Endothelial cell of umbilical vein (primary cell): ENCODE measurements at regions of chr1 and their contacts with region 1.

Region 1: GRCh38 chr1:152347116-152347728 is 12.6 kb downstream of the FLG2 start:
- DNase-seq: peak; percentile 63
- H3K4me3 ChIP-seq: no peak overlapping the region
- H3K27ac ChIP-seq: no peak overlapping the region
- H3K4me1 ChIP-seq: no peaks in the 10 kb centered on the region
- H3K27me3 ChIP-seq: peaks cover 0 to 1% of the 10 kb centered on the region in 2 experiments
- CTCF ChIP-seq: peak; percentile 68 to 72
- POLR2A ChIP-seq: no peak

Region 2: DNA sequence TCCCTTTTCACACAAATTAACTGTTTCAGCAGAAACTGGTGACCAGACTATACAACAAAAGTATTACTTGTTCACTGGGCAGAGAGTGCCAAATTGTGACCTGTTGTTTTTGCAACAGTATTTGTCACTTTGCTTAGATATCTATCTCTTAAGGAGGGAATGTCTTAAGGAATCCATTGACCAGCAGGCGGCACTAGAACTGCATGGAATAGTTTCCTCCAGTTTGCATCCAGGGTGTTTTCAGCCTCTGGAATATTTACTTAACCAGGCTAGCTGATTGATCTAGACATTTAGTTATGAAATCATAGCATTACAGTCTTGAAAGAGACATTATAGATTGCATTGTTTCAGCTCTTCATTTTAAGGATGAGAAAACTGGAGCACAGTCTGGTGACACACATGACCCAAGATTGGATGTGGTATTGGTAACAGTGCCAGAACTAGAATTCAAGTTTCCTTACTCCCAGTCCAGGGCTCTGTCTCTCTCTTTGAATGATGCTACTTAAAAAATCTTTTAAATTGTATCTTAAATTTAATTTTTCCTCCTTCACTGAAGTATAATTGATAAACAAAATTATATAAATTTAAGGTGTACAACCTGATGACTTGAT is 205.1 kb before region 1 on chr1:
- CTCF ChIA-PET with region 1: interaction called, 4 read pairs
- POLR2A ChIA-PET with region 1: no interaction called
- dilution Hi-C with region 1: no loop called
- intact Hi-C with region 1: loop called (anchors 1 kb)
- DNase-seq: peak; percentile 57
- H3K4me3 ChIP-seq: no peak overlapping the region
- H3K27ac ChIP-seq: no peak overlapping the region
- H3K4me1 ChIP-seq: no peaks in the 10 kb centered on the region
- H3K27me3 ChIP-seq: no peaks in the 10 kb centered on the region
- CTCF ChIP-seq: peak; percentile 63 to 65
- POLR2A ChIP-seq: no peak

Region 3: DNA sequence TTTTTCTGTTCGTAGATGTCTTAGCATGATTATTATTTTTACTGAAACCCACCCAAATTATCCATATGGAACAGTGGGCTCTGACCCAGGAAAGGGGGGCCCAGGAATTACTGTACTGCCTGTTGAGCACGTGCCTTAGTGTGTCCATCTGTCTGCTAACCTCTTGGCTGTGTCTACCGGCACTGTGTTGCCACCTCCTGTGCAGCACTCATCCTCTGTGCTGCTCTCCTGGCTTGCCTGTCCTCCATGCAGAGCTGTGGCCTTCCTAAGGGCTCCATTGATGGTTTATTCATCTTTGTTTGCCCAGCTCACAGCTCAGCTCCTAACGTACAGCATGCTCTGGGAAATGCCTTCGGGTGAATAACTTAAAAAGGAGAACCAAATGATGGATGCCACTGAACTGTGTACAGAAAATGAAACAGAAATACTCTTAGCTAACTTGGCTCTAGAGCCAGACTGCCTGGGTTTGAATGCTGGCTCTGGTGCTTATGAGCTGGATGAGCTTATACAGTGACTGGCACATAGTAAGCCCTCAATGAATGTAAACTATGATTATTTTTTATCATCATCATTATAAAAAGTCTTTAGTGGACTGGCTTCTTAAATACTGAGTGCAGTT is 176.8 kb before region 1 on chr1:
- CTCF ChIA-PET with region 1: no interaction called
- POLR2A ChIA-PET with region 1: no interaction called
- dilution Hi-C with region 1: no loop called
- intact Hi-C with region 1: no loop called
- DNase-seq: no peak
- H3K4me3 ChIP-seq: no peak overlapping the region
- H3K27ac ChIP-seq: no peak overlapping the region
- H3K4me1 ChIP-seq: no peaks in the 10 kb centered on the region
- H3K27me3 ChIP-seq: peaks cover 0 to 4% of the 10 kb centered on the region in 2 experiments
- CTCF ChIP-seq: no peak
- POLR2A ChIP-seq: no peak

Region 4: DNA sequence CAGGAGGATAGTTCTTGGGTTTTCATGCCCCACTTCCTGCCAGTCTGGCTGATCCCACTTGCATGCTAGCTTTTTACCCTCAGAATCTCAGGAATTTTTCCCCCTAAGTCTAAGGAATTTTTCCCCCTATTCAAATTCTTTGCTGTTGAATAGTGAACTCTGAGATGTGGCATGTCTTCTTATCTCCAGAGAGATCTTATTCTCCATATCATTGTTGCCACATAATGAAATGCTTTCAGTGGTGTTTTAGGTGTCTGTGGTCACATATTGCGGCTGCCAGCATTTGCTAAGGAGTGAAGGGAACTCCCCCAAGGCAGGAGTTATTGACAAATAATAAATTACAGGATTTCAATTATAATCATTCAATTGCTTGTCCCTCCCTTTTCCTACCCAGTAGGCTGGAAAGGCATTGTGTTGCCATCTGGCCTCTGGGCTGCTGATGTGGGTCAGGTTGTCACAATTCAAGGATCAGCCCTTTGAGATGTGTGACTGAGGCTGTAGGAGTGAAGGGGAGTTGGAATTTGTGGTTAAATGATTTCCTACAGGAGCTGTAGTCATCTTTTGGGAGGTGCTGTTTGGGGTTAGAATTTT is 18.3 kb before region 1 on chr1:
- CTCF ChIA-PET with region 1: interaction called, 28 read pairs
- POLR2A ChIA-PET with region 1: no interaction called
- dilution Hi-C with region 1: no loop called
- intact Hi-C with region 1: no loop called
- DNase-seq: no peak
- H3K4me3 ChIP-seq: no peak overlapping the region
- H3K27ac ChIP-seq: no peak overlapping the region
- H3K4me1 ChIP-seq: no peaks in the 10 kb centered on the region
- H3K27me3 ChIP-seq: no peaks in the 10 kb centered on the region
- CTCF ChIP-seq: no peak
- POLR2A ChIP-seq: no peak

Region 5: GRCh38 chr1:152359906-152360305 is 12.7 kb after region 1 on chr1 and contains the start of gene FLG2:
- CTCF ChIA-PET with region 1: interaction called, 16 read pairs
- POLR2A ChIA-PET with region 1: no interaction called
- dilution Hi-C with region 1: no loop called
- intact Hi-C with region 1: no loop called
- DNase-seq: no peak
- H3K4me3 ChIP-seq: no peak within 1 kb of the TSS
- H3K27ac ChIP-seq: no peak within 1 kb of the TSS
- H3K4me1 ChIP-seq: no peaks in the 10 kb centered on the region
- H3K27me3 ChIP-seq: no peaks in the 10 kb centered on the region
- CTCF ChIP-seq: no peak
- POLR2A ChIP-seq: no peak
- total RNA-seq, gene FLG2: not detected in 2 replicates

Region 6: DNA sequence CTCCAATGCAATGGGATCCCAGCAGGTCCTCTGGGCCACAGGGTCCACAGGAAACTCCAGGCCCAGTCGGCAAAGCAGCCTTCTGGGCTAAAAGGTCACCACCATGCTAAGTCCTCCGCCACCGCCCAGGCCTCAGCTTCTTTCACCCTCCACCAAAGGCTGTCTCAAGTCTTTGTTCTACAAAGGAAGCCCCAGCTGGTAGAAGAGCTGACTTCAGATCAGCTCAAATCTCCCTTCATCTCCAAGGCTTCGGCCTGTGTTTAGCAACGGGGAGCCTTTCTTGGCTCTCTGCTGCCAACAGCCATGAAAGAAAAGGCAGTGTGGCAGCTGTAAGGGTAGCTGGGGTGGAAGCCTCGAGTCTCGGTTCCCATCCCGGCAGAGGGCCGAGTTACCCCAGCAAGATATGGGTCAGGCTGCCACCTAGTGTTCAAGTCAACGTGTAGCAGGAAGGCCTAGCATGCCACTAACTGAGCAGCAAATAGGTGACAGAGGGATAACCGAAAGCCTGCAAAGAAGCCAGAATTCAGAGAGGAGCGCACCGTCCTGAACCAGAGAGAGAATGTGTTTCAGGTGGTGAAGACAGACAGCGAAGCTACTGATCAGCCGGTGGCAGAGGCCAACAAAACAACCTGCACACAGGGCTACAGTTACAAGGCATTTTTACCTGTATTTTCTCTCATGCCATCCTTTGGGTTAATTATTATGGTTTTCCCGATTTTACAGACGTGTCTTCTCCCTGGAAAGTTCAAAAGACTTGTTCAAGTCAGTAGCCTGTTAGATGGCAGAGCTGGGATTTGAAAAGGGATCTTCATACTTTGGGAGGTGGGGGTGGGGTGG is 93.6 kb after region 1 on chr1:
- CTCF ChIA-PET with region 1: interaction called, 11 read pairs
- POLR2A ChIA-PET with region 1: no interaction called
- dilution Hi-C with region 1: no loop called
- intact Hi-C with region 1: loop called (anchors 5 kb)
- DNase-seq: peak; percentile 57
- H3K4me3 ChIP-seq: no peak overlapping the region
- H3K27ac ChIP-seq: no peak overlapping the region
- H3K4me1 ChIP-seq: no peaks in the 10 kb centered on the region
- H3K27me3 ChIP-seq: peaks cover 0 to 4% of the 10 kb centered on the region in 2 experiments
- CTCF ChIP-seq: peak; percentile 73 to 87
- POLR2A ChIP-seq: no peak

Region 7: GRCh38 chr1:152533327-152533938 is 186.2 kb after region 1 on chr1:
- CTCF ChIA-PET with region 1: no interaction called
- POLR2A ChIA-PET with region 1: no interaction called
- dilution Hi-C with region 1: no loop called
- intact Hi-C with region 1: no loop called
- DNase-seq: peak; percentile 36
- H3K4me3 ChIP-seq: no peak overlapping the region
- H3K27ac ChIP-seq: no peak overlapping the region
- H3K4me1 ChIP-seq: no peaks in the 10 kb centered on the region
- H3K27me3 ChIP-seq: no peaks in the 10 kb centered on the region
- CTCF ChIP-seq: peak; percentile 51 to 62
- POLR2A ChIP-seq: no peak